Psoas muscle (tissue), 8 donors: ENCODE measurements at regions of chr6 and their contacts with region 1.

Region 1: GRCh38 chr6:149565527-149566409 is at the start of gene GINM1:
- DNase-seq: peak; percentile 93 to 97
- ATAC-seq: peak; percentile 94 to 95 (median 94)
- H3K4me3 ChIP-seq: peak within 1 kb of the TSS; percentile 97
- H3K27ac ChIP-seq: peak within 1 kb of the TSS; percentile 96
- H3K4me1 ChIP-seq: peaks cover 17% of the 10 kb centered on the region
- H3K27me3 ChIP-seq: no peaks in the 10 kb centered on the region
- CTCF ChIP-seq: peak; percentile 68
- total RNA-seq, gene GINM1: 26.8 to 39.0 (median 30.5) TPM

Region 2: DNA sequence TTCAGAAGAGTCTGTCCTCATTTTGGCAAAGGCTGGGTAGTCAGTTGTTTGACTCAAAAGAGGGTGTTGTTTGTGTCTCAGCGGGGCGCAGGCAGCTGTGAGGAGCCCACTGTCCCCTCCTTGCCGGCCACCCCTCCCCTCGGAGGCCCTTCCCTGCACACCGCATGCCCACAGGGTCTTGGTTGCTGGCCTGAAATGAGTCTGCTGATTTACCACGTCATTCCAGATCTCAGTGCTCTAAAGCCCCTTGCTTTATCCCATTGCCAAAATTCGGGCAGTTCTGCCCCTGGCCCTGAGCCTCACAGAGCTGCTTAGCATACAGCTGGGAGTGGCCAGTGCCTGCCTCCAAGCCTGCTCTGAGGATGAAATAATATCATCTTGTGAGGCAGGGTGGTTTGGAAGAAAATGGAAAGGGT is 598.2 kb before region 1 on chr6:
- intact Hi-C with region 1: no loop called
- DNase-seq: no peak
- ATAC-seq: no peak
- H3K4me3 ChIP-seq: no peak overlapping the region
- H3K27ac ChIP-seq: no peak overlapping the region
- H3K4me1 ChIP-seq: no peaks in the 10 kb centered on the region
- H3K27me3 ChIP-seq: peaks cover 0 to 9% (median 2%) of the 10 kb centered on the region in 3 donors
- CTCF ChIP-seq: no peak

Region 3: DNA sequence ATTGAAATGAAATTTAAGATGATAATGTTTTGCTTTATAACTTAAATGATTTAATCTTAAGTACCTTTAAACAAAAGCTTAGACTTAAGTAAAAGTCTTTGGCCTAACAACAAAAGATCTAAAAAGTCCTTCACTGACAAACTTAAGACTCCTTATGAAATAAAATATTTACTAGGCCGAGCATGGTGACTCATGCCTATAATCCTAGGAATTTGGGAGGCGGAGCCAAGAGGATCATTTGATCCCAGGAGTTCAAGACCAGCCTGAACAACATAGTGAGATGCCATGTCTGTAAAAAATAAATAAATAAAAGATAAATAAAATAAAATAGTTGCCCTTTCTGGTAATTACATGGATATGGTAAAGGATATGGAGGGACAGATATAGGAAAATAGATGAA is 70.3 kb after region 1 on chr6:
- intact Hi-C with region 1: loop called in 1 of 2 experiments (anchors 10 kb)
- DNase-seq: no peak
- ATAC-seq: peak in 3 of 4 donors; percentile 40 to 77 (median 55)
- H3K4me3 ChIP-seq: no peak overlapping the region
- H3K27ac ChIP-seq: no peak overlapping the region
- H3K4me1 ChIP-seq: no peaks in the 10 kb centered on the region
- H3K27me3 ChIP-seq: no peaks in the 10 kb centered on the region
- CTCF ChIP-seq: no peak

Region 4: GRCh38 chr6:149717588-149718458 is 152.1 kb after region 1 on chr6 and contains the start of gene LATS1:
- intact Hi-C with region 1: loop called (anchors 10 kb)
- DNase-seq: peak; percentile 94 to 95
- ATAC-seq: peak; percentile 93 to 95 (median 94)
- H3K4me3 ChIP-seq: peak within 1 kb of the TSS; percentile 99
- H3K27ac ChIP-seq: peak within 1 kb of the TSS; percentile 100
- H3K4me1 ChIP-seq: peaks cover 33% of the 10 kb centered on the region
- H3K27me3 ChIP-seq: no peaks in the 10 kb centered on the region
- CTCF ChIP-seq: no peak
- total RNA-seq, gene LATS1: 11.0 to 15.5 (median 13.9) TPM